ENCODE measurements at regions of chr11 and their contacts with region 1.

Region 1: GRCh38 chr11:125091247-125091876 is 20.1 kb downstream of the TMEM218 start:
- DNase-seq: no peak
- H3K4me3 ChIP-seq: no peak overlapping the region
- H3K27ac ChIP-seq: no peak overlapping the region
- H3K4me1 ChIP-seq: no peaks in the 10 kb centered on the region
- H3K27me3 ChIP-seq: no peaks in the 10 kb centered on the region
- CTCF ChIP-seq: peak in 3 of 4 experiments; percentile 51 to 71 (median 56)
- POLR2A ChIP-seq: no peak

Region 2: DNA sequence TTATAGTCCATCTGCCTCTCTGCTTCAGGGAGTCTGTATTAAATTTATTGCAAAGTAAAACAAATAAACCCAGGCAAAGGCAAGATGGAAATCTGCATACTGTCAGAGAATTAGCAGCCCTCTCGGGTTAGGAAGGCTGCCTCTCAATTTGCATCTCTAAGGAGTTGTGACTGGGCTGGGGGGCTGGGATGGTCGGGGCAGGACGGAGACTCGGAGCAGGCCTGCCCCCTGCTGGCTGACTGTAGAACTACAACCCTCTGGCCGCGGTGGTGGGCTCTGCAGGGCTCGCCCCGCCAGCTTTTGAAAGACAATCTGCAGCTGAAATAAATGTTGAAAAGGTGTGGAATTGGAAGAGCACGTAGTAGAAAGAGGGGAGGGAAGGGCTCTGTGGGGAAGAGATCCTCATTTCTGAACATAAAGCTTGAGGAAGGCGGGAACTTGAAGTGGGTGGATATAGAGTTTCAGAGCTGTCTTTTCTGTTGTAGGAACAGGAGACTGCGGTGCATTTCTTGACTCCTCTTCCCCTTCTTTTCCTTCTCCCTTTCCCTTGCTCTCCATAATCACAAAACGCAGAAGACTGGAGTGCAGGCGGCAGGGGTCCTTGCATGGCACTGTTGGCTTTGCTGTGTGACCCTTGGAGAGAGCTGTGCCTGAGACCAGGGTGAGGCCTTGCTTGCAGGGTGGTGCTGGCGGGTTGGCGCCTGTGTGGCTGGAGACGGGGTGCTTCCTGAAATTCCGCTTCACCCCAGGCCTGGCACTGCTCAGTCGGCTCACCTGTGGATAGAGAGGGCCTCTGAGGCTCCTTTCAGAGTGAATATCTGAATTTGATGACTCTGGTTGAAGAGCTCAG is 50.5 kb after region 1 on chr11:
- intact Hi-C with region 1: loop called (anchors 10 kb)
- DNase-seq: no peak
- H3K4me3 ChIP-seq: no peak overlapping the region
- H3K27ac ChIP-seq: no peak overlapping the region
- H3K4me1 ChIP-seq: no peaks in the 10 kb centered on the region
- H3K27me3 ChIP-seq: no peaks in the 10 kb centered on the region
- CTCF ChIP-seq: peak; percentile 86 to 96 (median 90)
- POLR2A ChIP-seq: no peak

Region 3: GRCh38 chr11:125345421-125346178 is 254.2 kb after region 1 on chr11:
- intact Hi-C with region 1: loop called (anchors 5 kb)
- DNase-seq: peak; percentile 62
- H3K4me3 ChIP-seq: no peak overlapping the region
- H3K27ac ChIP-seq: peak overlapping the region; percentile 21 to 46
- H3K4me1 ChIP-seq: peaks cover 5% of the 10 kb centered on the region
- H3K27me3 ChIP-seq: no peaks in the 10 kb centered on the region
- CTCF ChIP-seq: peak; percentile 80 to 92 (median 87)
- POLR2A ChIP-seq: no peak

Region 4: DNA sequence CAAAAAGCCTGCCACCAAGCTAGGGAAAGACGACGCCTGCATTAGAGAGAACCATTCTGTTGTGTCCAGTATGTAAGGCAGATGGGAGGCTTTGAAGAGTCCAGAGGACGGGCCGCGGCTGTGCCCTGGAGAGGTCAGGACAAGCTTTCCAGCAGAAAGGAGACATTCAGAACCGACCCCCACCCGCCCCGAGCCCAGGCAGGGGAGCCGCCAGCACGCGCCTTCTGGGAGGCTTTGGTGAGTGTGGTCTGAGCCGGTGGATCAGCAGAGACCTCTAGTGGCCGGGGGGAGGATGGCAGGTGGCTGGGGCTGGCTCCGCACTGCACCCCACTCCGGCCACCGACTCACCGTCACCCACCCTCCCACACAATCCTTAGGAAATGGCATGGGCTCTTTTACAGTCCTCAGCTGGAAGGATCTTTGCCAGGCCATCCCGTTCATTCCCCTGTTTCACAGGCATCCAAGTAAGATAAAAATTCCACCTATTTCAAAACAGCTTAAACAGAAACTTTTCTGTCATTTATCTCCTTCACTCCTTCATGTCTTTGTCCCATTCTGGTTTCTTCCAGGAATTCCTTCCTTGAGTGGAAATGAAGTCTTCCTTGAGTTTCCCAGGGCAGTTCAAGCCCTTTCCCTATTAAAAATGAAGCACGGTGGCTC is 313.5 kb after region 1 on chr11:
- intact Hi-C with region 1: loop called (anchors 5 kb)
- DNase-seq: peak; percentile 57
- H3K4me3 ChIP-seq: no peak overlapping the region
- H3K27ac ChIP-seq: peak overlapping the region; percentile 10 to 11
- H3K4me1 ChIP-seq: no peaks in the 10 kb centered on the region
- H3K27me3 ChIP-seq: no peaks in the 10 kb centered on the region
- CTCF ChIP-seq: peak; percentile 72 to 91 (median 86)
- POLR2A ChIP-seq: no peak

Region 5: GRCh38 chr11:125433454-125434121 is 342.2 kb after region 1 on chr11:
- intact Hi-C with region 1: loop called (anchors 5 kb)
- DNase-seq: no peak
- H3K4me3 ChIP-seq: no peak overlapping the region
- H3K27ac ChIP-seq: no peak overlapping the region
- H3K4me1 ChIP-seq: no peaks in the 10 kb centered on the region
- H3K27me3 ChIP-seq: no peaks in the 10 kb centered on the region
- CTCF ChIP-seq: peak in 3 of 4 experiments; percentile 15 to 36 (median 32)
- POLR2A ChIP-seq: no peak

Region 6: DNA sequence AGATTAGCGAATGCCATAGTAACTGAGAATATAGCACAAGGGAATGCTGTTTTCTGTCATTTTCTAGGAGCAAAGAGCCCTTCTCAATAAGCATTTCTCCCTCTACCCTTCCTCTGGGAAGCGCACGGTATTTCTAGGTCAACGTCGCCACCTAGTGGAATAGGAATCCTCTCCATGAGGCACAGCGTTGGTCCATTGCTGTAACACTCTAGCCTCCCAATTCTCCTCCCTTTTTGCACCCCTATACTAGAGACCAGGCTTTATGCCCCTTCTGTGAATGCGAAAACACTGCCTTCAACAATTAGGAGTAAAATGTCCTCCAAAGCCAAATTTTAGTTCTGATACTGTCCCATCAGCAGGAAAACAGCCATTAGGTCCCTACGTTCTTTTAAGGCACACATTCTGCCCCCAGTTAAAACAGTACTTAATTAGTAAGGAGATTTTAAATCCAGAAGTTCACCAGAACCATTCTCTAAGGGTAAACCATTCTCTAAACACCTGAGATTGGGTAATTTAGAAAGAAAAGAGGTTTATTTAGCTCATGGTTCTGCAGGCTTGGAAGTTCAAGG is 783.3 kb after region 1 on chr11:
- intact Hi-C with region 1: loop called (anchors 10 kb)
- DNase-seq: peak; percentile 36
- H3K4me3 ChIP-seq: no peak overlapping the region
- H3K27ac ChIP-seq: no peak overlapping the region
- H3K4me1 ChIP-seq: no peaks in the 10 kb centered on the region
- H3K27me3 ChIP-seq: no peaks in the 10 kb centered on the region
- CTCF ChIP-seq: peak in 3 of 4 experiments; percentile 47 to 59 (median 59)
- POLR2A ChIP-seq: no peak

Measured in prostate gland (tissue), 2 donors.